Activated CD4-positive, alpha-beta memory T cell treated with anti-CD3 and anti-CD28 coated beads for 36 hours (primary cell): ENCODE measurements at regions of chr7 and their contacts with region 1.

Region 1: GRCh38 chr7:142669074-142669654 is 80.1 kb upstream of the PRSS1 start:
- DNase-seq: no peak
- H3K4me3 Mint-ChIP-seq: no peak overlapping the region
- H3K27ac Mint-ChIP-seq: peak overlapping the region; percentile 68
- H3K4me1 Mint-ChIP-seq: peaks cover 29% of the 10 kb centered on the region
- H3K27me3 Mint-ChIP-seq: no peaks in the 10 kb centered on the region

Region 2: GRCh38 chr7:142711746-142712619 is 42.8 kb after region 1 on chr7:
- CTCF ChIA-PET with region 1: interaction called, 3 read pairs
- POLR2A ChIA-PET with region 1: no interaction called
- intact Hi-C with region 1: loop called (anchors 5 kb)
- DNase-seq: peak; percentile 52
- H3K4me3 Mint-ChIP-seq: peak overlapping the region; percentile 79
- H3K27ac Mint-ChIP-seq: peak overlapping the region; percentile 89
- H3K4me1 Mint-ChIP-seq: peaks cover 50% of the 10 kb centered on the region
- H3K27me3 Mint-ChIP-seq: no peaks in the 10 kb centered on the region

Region 3: GRCh38 chr7:143104832-143105241 is 435.7 kb after region 1 on chr7:
- CTCF ChIA-PET with region 1: no interaction called
- POLR2A ChIA-PET with region 1: no interaction called
- intact Hi-C with region 1: no loop called
- DNase-seq: no peak
- H3K4me3 Mint-ChIP-seq: no peak overlapping the region
- H3K27ac Mint-ChIP-seq: no peak overlapping the region
- H3K4me1 Mint-ChIP-seq: no peaks in the 10 kb centered on the region
- H3K27me3 Mint-ChIP-seq: no peaks in the 10 kb centered on the region